Panc1 (cell line): ENCODE measurements at regions of chr5 and their contacts with region 1.

Region 1: DNA sequence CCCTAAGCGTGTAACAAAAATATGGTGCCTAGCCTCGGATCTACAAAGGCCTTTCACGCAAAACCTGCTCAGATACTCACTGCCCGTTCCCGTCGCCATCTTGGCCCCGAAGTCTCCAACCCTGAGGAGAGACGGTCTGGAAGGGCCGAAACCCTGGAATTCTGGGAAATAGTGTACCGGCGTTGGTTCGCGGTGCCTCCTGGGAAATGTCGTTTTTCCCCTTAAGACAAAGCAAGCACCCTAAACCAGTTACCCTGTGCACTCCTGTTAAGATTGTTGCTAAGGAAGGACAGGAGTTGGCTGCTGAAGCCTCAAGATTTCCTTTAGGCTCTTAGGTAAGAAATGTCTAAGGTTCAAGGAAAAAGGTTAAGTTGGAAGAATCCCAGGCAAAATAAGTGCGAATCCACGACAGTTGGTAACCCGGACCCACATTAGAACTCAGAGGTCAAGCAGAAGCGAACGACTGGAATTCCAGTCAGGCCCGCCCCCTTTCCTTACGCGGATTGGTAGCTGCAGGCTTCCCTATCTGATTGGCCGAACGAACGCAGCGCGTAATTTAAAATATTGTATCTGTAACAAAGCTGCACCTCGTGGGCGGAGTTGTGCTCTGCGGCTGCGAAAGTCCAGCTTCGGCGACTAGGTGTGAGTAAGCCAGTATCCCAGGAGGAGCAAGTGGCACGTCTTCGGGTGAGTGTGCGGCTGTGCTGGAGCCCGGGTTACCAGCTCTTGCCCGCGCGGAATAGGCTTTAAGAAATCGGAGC is at the starts of genes BRD8 and KIF20A:
- DNase-seq: peak; percentile 98
- ATAC-seq: peak; percentile 94
- H3K4me3 ChIP-seq: peak within 1 kb of the TSS; percentile 93 to 97
- H3K27ac ChIP-seq: peak within 1 kb of the TSS; percentile 100
- H3K4me1 ChIP-seq: peaks cover 22% of the 10 kb centered on the region
- H3K27me3 ChIP-seq: no peaks in the 10 kb centered on the region
- CTCF ChIP-seq: no peak
- total RNA-seq, gene BRD8: 92.1 TPM
- total RNA-seq, gene KIF20A: 55.4 TPM

Region 2: GRCh38 chr5:137395008-137395755 is 783.5 kb before region 1 on chr5:
- CTCF ChIA-PET with region 1: no interaction called
- POLR2A ChIA-PET with region 1: no interaction called
- in situ Hi-C with region 1: no loop called
- intact Hi-C with region 1: no loop called
- DNase-seq: peak; percentile 22
- ATAC-seq: peak; percentile 62; the same call in 1 of the 2 replicates
- H3K4me3 ChIP-seq: no peak overlapping the region
- H3K27ac ChIP-seq: no peak overlapping the region
- H3K4me1 ChIP-seq: no peaks in the 10 kb centered on the region
- H3K27me3 ChIP-seq: no peaks in the 10 kb centered on the region; the same call in 1 of the 2 replicates
- CTCF ChIP-seq: no peak

Region 3: GRCh38 chr5:138257583-138257982 is 78.9 kb after region 1 on chr5:
- CTCF ChIA-PET with region 1: no interaction called
- POLR2A ChIA-PET with region 1: no interaction called
- in situ Hi-C with region 1: no loop called
- intact Hi-C with region 1: no loop called
- DNase-seq: no peak
- ATAC-seq: no peak
- H3K4me3 ChIP-seq: no peak overlapping the region
- H3K27ac ChIP-seq: no peak overlapping the region
- H3K4me1 ChIP-seq: no peaks in the 10 kb centered on the region
- H3K27me3 ChIP-seq: no peaks in the 10 kb centered on the region; the same call in 1 of the 2 replicates
- CTCF ChIP-seq: no peak

Region 4: DNA sequence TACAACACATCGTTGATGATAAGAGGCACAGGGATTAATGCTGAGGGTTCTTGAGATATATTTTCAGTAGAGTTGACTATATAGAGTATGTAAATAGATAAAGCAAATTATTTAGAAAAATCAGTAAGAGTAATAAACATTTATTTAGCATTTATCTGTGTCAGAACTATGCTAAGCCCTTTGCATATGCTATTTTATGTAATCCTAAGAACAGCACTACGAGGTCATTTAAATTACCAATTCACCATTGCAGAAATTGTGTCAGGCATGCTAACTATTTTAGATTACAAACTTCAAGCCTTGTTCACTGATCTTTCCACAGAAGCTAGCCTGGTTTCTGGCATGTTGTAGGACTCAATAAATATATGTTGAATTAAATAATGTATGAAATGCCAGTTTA is 239.7 kb after region 1 on chr5:
- CTCF ChIA-PET with region 1: no interaction called
- POLR2A ChIA-PET with region 1: interaction called, 3 read pairs
- in situ Hi-C with region 1: no loop called
- intact Hi-C with region 1: loop called (anchors 10 kb)
- DNase-seq: no peak
- ATAC-seq: no peak
- H3K4me3 ChIP-seq: no peak overlapping the region
- H3K27ac ChIP-seq: no peak overlapping the region
- H3K4me1 ChIP-seq: no peaks in the 10 kb centered on the region
- H3K27me3 ChIP-seq: no peaks in the 10 kb centered on the region
- CTCF ChIP-seq: no peak